ENCODE measurements at regions of chr22 and their contacts with region 1.

Region 1: DNA sequence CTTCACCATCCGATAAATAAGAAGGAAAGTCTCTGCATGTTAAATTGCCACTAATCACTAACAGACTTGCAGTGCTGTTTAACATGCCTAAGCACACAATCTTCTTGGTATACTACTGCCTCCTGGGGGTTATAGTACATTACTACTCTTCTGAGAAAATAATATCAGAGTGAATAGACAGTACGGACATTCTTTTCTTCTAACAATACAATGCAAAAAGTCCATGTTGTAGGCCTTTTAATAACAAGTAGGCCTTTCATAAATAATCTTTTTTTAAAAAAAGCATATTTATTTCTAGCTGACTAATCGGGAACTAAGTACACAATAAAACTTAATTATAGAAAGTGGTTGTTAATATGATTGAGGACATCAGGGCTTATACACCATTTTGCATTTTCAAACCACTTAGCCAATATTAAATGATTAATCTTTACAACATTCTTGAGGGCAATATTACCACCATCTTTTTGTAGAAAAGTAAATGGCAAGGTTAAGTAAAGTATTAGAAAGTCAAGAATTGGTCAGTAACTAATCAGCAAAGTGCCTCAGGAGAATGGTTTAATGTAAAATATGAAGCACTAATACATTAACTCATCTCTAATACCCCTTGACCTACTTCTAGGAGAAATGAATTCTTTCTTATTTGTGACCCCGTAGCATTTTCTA is 84.7 kb downstream of the TTC28 start:
- DNase-seq: no peak
- ATAC-seq: peak; percentile 83
- H3K4me3 ChIP-seq: no peak overlapping the region
- H3K27ac ChIP-seq: no peak overlapping the region
- H3K4me1 ChIP-seq: no peaks in the 10 kb centered on the region
- H3K27me3 ChIP-seq: no peaks in the 10 kb centered on the region

Region 2: DNA sequence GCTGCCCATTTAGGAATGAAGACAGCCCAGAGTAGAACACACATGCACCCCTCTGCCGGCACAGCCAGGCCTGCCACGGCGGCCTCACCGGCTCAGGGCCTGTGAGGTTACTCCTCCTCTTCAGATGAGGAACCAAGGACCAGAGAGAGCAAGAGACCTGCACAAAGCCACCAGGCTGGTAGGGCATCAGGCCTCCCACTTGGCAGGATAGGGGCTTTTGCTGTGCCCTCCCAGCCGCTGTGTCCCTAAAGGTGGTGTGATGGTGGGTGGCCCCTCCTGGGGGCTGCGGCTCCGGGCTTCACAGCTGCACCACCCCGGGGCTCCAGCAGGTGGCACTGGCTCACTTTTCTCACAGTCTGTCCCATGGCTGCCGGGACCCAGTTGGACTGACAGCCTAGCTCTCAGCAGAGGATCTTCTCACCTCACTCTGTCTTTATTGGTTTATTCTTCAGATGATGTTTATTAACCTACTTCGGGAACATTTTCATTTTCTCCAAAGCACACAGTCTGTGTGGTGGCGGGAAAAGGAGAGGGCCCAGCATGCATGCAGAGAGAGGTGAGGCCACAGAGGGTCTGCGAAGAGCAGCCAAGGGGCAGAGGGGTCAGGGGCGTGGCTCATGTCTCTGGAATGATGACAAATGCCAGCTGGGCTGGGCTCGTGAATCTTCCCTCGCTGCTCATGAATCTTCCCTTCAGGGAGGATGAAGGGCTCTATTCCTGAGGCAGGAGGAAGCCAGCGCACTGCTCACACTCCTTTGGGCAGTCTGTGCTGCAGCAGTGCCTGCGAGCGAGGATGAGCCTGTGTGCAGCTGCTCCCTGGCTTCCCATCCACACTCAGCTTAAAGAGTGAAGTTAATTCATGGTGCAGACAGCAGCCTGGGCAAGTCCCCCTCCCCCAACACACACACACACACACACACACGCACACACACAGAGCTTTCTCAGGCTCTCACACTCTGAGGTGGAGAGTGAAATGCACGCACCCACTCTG is 574.8 kb before region 1 on chr22:
- intact Hi-C with region 1: loop called in 1 of 2 experiments (anchors 2 kb)
- DNase-seq: peak; percentile 75 to 91
- ATAC-seq: peak; percentile 79
- H3K4me3 ChIP-seq: no peak overlapping the region
- H3K27ac ChIP-seq: no peak overlapping the region
- H3K4me1 ChIP-seq: no peaks in the 10 kb centered on the region
- H3K27me3 ChIP-seq: no peaks in the 10 kb centered on the region

Region 3: DNA sequence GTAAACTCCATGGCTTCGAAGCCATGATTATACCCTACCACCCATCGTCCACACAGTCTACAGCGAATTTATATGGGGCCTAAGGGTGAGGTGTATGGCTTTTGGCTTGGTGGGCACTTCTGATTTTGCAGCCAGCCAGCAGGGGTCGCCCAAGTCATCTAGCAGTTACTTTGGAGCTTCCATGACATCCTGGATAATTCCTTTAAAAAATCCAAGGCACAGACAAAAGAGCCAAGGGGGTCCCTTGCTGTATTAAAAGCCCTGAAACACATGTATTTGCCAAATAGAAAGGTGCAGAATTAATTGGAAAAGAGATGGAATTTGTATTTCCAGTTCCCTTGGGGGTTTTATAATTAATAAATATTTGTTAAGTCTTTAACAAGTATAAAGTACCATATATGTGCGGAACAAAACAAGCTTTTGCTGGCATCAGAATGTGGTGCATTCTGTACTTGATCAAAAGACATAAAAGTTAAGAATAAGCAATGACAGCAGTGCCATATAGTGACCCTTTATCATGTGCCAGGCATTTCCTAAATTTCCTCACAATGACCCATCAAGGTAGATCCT is 543.1 kb before region 1 on chr22:
- intact Hi-C with region 1: loop called (anchors 2 to 5 kb)
- DNase-seq: peak; percentile 71 to 92
- ATAC-seq: no peak
- H3K4me3 ChIP-seq: no peak overlapping the region
- H3K27ac ChIP-seq: no peak overlapping the region
- H3K4me1 ChIP-seq: no peaks in the 10 kb centered on the region
- H3K27me3 ChIP-seq: no peaks in the 10 kb centered on the region

Measured in aorta (tissue), 5 donors.